Activated CD4-positive, alpha-beta T cell treated with anti-CD3 and anti-CD28 coated beads for 36 hours (primary cell): ENCODE measurements at regions of chr15 and their contacts with region 1.

Region 1: DNA sequence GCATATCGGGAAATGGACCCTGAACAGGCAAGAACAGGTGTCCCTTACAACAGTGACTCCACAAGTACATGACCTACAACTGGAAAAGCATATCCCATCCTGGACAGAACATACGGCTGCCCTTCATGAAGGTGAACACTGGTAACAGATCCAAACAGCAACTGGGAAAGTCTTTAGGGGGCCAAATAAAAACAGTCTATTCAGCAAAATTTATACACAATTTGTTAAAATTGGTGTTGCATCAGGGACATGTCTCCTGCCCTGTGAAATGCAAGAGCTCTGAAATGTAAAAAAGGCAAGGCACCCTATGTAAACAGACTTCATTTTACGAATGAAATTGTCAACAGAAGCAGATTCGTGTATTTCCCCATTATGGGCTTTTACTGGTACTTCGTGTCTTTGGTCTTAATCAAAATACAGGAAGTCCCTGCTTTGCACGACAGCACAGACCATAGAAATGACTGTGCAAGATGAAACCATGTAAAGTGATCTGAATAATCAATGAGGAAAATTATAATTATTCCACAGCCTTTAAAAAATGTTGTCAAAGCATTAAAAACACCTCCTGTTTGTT is 127.3 kb upstream of the THBS1 start:
- DNase-seq: peak; percentile 7
- ATAC-seq: no peak
- H3K4me3 Mint-ChIP-seq: no peak overlapping the region
- H3K27ac Mint-ChIP-seq: no peak overlapping the region
- H3K4me1 Mint-ChIP-seq: no peaks in the 10 kb centered on the region
- H3K27me3 Mint-ChIP-seq: peaks cover 5% of the 10 kb centered on the region

Region 2: DNA sequence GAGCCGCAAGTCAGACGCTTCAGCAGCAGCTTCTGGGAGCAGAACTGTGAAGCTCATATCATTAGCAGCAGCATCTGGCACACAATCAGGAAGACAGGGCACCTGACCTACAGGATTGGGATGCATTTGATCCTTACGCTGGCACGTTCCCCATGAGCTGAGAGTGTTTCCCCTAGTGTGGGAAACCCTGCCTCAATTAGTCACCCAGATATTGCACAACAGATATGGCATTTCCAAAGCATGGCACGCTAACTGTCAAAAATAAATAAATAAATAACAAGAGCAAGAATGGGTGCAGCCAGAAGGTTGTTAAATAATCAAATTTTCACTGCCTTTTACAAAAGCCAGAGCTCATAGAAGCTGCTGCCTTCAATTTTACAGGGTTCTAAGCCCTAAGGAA is 62.4 kb before region 1 on chr15:
- CTCF ChIA-PET with region 1: no interaction called
- POLR2A ChIA-PET with region 1: no interaction called
- intact Hi-C with region 1: loop called in 1 of 2 experiments (anchors 10 kb)
- DNase-seq: no peak
- ATAC-seq: no peak
- H3K4me3 Mint-ChIP-seq: no peak overlapping the region
- H3K27ac Mint-ChIP-seq: no peak overlapping the region
- H3K4me1 Mint-ChIP-seq: no peaks in the 10 kb centered on the region
- H3K27me3 Mint-ChIP-seq: peaks cover 6% of the 10 kb centered on the region

Region 3: GRCh38 chr15:39426552-39427532 is 26.7 kb before region 1 on chr15:
- CTCF ChIA-PET with region 1: no interaction called
- POLR2A ChIA-PET with region 1: no interaction called
- intact Hi-C with region 1: no loop called
- DNase-seq: peak; percentile 90
- ATAC-seq: peak; percentile 88
- H3K4me3 Mint-ChIP-seq: peak overlapping the region; percentile 37
- H3K27ac Mint-ChIP-seq: no peak overlapping the region
- H3K4me1 Mint-ChIP-seq: peaks cover 37% of the 10 kb centered on the region
- H3K27me3 Mint-ChIP-seq: peaks cover 24% of the 10 kb centered on the region